Endothelial cell of umbilical vein (primary cell): ENCODE measurements at regions of chr10 and their contacts with region 1.

Region 1: DNA sequence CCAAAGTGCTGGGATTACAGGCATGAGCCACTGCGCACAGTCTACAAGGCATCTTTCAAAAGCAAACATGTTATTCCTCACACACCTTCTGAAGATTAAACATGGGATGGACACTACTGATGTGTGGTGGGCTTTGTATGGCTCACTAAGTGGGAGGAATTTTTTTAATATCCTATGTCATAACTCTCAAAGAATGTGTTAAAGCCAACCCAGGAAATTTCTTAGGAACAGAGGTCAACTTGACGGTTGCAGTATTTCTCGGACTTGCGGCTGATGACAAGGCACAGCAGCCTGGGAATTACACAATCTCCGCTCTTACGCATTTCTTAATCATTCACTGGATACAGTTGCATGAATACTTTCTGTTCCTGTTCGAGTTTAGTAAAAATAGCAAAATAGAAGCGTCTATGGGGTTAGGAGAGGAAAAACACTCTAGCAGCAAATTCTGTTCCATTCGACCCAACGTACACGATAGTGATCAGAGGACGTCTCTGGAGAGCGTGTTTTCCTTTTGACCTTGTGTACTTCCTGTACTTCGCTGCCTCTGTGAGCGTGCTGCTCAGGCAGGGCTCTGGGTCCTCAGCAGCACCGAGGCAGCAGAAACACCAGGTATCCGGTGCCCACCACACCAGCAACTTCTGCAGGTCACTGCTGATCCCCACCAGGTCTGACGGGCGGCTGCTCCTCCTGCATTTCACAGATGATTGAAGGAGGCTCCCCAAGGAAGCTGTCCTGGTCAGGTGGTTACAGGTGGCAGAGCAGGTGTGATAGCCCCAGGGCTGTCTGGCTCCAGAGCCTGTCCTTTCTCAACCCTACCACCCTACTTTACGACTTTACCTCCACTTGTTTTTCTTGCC is 26.4 kb upstream of the SRGN start:
- DNase-seq: peak; percentile 96
- H3K4me3 ChIP-seq: peak overlapping the region in 2 of 3 experiments; percentile 16 to 45
- H3K27ac ChIP-seq: peak overlapping the region; percentile 91
- H3K4me1 ChIP-seq: peaks cover 58% of the 10 kb centered on the region
- H3K27me3 ChIP-seq: no peaks in the 10 kb centered on the region
- CTCF ChIP-seq: no peak
- POLR2A ChIP-seq: peak; percentile 55

Region 2: DNA sequence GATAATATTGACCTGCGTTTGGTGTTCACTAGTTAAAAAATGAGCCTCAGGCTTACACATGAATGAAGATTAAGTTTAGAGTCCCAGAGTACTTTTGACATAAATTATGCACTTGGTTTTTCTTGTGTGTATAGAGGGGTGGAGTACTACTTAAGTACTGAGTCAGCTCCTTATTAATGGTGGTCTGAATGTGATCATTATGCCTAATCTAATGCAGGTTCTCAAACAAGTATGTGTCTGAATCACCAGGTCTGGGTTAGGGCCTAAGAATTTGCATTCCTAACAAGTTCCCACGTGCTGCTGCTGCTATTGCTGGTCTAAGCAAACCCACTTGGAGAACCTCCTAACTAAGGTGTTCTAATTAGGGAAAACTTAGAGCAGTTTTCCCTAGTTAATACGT is 264.9 kb before region 1 on chr10:
- CTCF ChIA-PET with region 1: no interaction called
- POLR2A ChIA-PET with region 1: no interaction called
- dilution Hi-C with region 1: no loop called
- intact Hi-C with region 1: no loop called
- DNase-seq: no peak
- H3K4me3 ChIP-seq: no peak overlapping the region
- H3K27ac ChIP-seq: no peak overlapping the region
- H3K4me1 ChIP-seq: no peaks in the 10 kb centered on the region
- H3K27me3 ChIP-seq: no peaks in the 10 kb centered on the region
- CTCF ChIP-seq: no peak
- POLR2A ChIP-seq: no peak

Region 3: DNA sequence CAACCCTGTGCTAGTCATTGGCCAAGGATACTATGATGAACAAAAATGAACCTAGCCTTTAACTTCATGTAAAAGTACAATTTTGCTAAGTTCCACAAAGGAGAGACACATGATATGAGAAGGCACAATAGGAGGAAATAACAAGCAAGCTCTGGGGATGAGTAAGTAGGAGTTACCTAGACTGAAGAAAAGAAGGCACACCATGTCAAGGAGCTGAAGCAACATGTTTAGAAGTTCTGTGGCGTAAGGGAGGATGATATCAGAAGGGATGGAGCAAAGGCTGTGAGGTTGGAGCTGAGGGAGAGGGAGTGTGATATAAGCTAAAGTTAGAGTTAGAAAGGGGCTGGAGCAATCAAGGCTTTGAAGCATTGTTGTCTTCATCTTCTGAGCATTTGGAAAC is 47.4 kb before region 1 on chr10:
- CTCF ChIA-PET with region 1: interaction called, 7 read pairs
- POLR2A ChIA-PET with region 1: no interaction called
- dilution Hi-C with region 1: no loop called
- intact Hi-C with region 1: loop called (anchors 1 kb)
- DNase-seq: peak; percentile 68
- H3K4me3 ChIP-seq: no peak overlapping the region
- H3K27ac ChIP-seq: peak overlapping the region; percentile 86
- H3K4me1 ChIP-seq: peaks cover 31% of the 10 kb centered on the region
- H3K27me3 ChIP-seq: no peaks in the 10 kb centered on the region
- CTCF ChIP-seq: no peak
- POLR2A ChIP-seq: peak; percentile 44

Region 4: GRCh38 chr10:69087590-69088470 is 26.3 kb after region 1 on chr10 and contains the start of gene SRGN:
- CTCF ChIA-PET with region 1: interaction called, 8 read pairs
- POLR2A ChIA-PET with region 1: interaction called, 3 read pairs
- dilution Hi-C with region 1: no loop called
- intact Hi-C with region 1: loop called (anchors 1 kb)
- DNase-seq: peak; percentile 92
- H3K4me3 ChIP-seq: peak within 1 kb of the TSS; percentile 74 to 95 (median 88)
- H3K27ac ChIP-seq: peak within 1 kb of the TSS; percentile 96
- H3K4me1 ChIP-seq: peaks cover 46% of the 10 kb centered on the region
- H3K27me3 ChIP-seq: no peaks in the 10 kb centered on the region
- CTCF ChIP-seq: no peak
- POLR2A ChIP-seq: peak; percentile 93
- total RNA-seq, gene SRGN: 433 and 450 TPM in 2 replicates